ENCODE measurements at regions of chr6 and their contacts with region 1.

Region 1: DNA sequence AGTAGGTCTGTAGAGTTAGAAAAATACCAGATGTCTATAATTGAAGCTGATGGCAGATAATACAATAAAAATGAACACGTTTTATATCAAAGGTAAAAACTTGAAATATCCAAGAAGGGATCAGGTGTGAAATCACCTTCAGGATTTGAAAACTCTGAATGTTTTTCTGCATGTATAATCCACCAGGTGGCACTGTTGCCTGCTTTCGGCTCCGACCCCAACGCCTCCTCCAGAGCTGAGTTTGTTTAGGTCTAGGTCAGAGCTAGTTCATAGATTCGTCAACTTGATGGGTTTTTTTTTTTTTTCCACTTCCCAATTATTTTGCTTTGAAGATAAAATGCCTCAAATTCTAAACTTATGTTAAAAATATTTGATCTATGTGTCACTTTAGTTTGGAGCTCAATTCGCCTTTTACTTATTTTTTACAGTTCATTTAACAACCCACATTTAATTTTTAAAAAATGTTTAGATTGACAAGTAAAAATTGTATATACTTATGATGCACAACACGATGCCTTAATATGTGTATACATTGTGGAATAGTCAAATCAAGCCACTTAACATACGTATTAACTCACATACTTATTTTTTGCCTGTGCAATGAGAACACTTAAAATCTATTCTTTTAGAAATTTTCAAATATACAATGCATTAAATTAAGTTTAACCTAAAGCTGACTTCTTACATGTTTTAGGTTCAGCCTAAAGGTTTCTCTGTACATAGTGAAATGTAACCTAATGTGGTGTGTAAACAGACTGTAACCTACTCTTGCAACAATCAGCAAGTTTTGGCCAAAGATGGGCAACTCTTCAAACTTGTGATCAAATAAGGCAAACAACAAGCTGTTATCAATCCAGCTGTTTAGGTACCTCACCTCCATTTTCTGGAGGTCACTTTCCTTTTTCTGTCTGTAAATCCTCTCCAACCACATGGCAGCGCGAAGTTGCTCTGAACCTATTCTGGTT is 39.4 kb upstream of the ENPP4 start:
- DNase-seq: peak; percentile 41 to 67
- H3K4me3 ChIP-seq: no peak overlapping the region
- H3K27ac ChIP-seq: no peak overlapping the region
- H3K4me1 ChIP-seq: no peaks in the 10 kb centered on the region
- H3K27me3 ChIP-seq: peaks cover 0 to 6% of the 10 kb centered on the region in 2 donors
- CTCF ChIP-seq: peak; percentile 73 to 76

Region 2: GRCh38 chr6:46419576-46420002 is 329.2 kb after region 1 on chr6:
- intact Hi-C with region 1: loop called (anchors 5 kb)
- DNase-seq: peak; percentile 63 to 76
- H3K4me3 ChIP-seq: no peak overlapping the region
- H3K27ac ChIP-seq: peak overlapping the region; percentile 50 to 53
- H3K4me1 ChIP-seq: peaks cover 0 to 65% (median 13%) of the 10 kb centered on the region in 4 donors
- H3K27me3 ChIP-seq: no peaks in the 10 kb centered on the region
- CTCF ChIP-seq: peak; percentile 74 to 75

Region 3: DNA sequence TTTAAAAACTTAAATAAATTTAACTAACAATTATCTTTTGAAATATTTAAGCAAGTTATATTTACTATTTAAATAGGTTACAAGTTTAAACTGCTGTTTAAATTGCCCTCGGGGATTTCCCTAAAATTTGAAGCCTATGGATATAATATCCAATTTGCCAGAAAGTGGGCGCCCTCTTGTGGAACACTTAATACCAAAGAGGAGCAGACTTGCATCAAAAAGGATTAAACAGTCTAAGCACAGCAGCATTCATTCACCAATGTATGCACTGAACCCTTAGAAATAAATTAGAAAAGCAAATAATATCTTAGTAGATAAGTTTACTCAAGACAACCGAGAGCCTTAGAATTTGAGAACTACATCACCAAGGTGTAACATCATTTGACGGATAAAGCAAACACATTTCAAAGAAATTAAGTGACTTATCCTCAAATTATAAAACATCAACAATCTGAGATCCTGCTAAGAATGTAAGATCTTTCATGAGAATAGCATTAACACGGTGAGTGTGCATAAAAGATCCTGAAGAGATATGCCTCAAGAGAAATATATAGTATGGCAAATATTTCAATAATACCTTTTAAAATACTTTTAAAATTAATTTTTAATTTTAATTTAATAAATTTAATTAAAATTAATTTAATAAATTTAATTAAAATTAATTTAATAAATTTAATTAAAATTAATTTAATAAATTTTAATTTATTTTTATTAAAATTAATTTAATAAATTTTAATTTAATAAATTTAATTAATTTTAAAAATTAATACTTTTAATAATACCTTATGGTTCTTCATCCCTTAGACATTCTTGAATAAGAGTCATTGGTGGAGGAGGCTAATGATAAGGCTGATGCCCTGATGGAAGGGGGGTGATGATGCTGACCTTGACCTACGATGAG is 691.3 kb after region 1 on chr6:
- intact Hi-C with region 1: loop called (anchors 10 kb)
- DNase-seq: peak in 1 of 2 donors; percentile 72
- H3K4me3 ChIP-seq: no peak overlapping the region
- H3K27ac ChIP-seq: no peak overlapping the region
- H3K4me1 ChIP-seq: no peaks in the 10 kb centered on the region
- H3K27me3 ChIP-seq: no peaks in the 10 kb centered on the region
- CTCF ChIP-seq: peak; percentile 50 to 55